ENCODE measurements at regions of chr11 and their contacts with region 1.

Region 1: DNA sequence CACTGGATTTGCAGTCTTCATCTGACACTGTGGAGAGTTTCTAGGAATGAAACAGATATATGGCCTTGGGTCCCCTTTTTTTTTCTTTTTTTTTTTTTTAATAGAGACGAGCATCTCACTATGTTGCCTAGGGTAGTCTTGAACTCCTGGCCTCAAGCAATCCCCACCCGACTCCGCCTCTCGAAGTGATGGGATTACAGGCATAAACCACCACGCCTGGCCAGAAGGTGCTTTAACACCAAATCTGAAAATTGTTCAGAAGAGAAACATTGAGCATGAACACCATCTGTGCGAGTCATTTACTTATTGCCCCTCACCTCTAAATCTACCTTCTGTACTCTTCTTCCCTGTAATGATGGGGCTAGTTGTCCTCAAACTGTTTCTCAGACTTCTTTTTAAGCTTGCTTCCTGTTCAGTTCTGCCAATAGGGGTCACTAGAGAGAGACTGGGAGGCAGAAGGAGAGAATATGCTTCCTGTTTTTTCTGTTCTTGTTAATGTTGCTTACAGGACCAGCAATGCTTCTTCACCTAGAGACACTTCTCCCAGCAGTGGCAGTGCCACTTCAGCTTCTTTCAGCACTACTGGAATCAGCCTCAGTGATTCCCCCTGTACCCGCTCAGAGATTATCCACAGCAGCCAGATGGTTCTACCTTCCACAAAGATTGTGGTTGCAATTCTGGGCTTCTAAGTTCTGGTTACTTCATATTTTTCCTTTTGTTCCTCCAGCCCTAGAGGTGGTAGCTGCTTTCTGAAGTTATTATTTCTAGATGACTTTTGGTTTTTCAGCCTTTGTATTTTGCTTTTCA is 20.8 kb upstream of the ZBED5 start:
- DNase-seq: no peak
- H3K4me3 ChIP-seq: no peak overlapping the region
- CTCF ChIP-seq: peak; percentile 61

Region 2: GRCh38 chr11:10844356-10844755 is 34.3 kb before region 1 on chr11:
- CTCF ChIA-PET with region 1: interaction called, 17 read pairs
- POLR2A ChIA-PET with region 1: no interaction called
- DNase-seq: no peak
- H3K4me3 ChIP-seq: no peak overlapping the region
- CTCF ChIP-seq: no peak

Region 3: GRCh38 chr11:10866893-10867331 is 11.7 kb before region 1 on chr11:
- CTCF ChIA-PET with region 1: interaction called, 15 read pairs
- POLR2A ChIA-PET with region 1: no interaction called
- DNase-seq: no peak
- H3K4me3 ChIP-seq: no peak overlapping the region
- CTCF ChIP-seq: no peak

Region 4: DNA sequence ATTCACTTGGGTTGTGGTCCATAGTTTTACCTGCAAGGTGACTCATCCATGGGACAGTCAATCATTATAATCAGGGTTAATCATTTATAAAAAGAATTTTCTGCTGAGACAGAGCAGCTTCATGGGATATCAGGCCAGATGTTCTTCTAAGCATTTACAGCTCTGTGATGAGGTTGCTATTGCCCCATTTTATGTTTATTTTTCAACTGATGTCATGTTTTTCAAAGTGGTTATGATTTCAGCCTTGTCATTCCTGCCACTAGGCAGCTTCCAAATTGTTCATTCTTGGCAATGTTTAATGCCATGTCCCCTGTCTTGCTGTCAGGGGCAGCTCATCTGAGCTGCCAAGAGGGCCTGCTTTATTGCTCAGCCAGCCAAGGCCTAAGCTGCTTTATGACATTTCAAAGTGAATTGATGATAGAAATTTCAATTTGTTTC is 15.1 kb after region 1 on chr11:
- CTCF ChIA-PET with region 1: interaction called, 145 read pairs
- POLR2A ChIA-PET with region 1: no interaction called
- DNase-seq: no peak
- H3K4me3 ChIP-seq: no peak overlapping the region
- CTCF ChIP-seq: peak; percentile 29

Region 5: DNA sequence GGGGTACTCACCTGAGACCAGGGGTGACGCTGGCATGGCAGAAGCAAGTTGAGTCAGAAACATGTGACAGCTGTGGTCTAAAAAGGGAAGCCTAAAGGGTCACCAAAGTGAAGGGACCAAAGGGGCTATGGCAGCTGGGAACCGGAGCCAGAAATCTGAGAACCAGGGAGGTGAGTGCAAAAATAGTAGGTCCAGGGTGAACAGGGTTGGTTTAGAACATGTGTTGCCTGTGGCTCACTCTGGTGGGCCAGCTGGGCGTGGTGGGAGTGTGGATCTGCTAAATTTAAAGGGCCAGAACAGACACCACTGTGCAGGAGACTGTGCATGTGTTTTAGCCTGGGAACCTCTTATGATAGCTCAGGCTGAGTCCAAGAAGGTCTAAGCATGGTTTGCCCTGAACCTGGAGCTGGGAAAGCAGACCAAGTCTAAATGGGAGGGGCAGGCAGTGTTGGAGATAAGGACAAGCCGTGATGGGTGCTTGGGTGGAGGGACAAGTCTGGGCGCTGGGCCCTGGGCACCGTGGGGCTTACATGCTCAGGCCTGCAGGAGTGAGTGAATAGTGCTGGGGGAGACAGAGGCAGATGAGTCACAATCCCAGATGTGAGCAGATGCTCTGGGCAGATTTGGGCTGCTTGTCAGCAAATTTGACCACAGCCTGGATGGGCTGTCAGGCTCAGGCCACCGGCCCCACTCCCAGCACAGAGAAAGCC is 20.7 kb after region 1 on chr11:
- CTCF ChIA-PET with region 1: interaction called, 145 read pairs
- POLR2A ChIA-PET with region 1: no interaction called
- DNase-seq: no peak
- H3K4me3 ChIP-seq: peak overlapping the region; percentile 35
- CTCF ChIP-seq: no peak

Region 6: DNA sequence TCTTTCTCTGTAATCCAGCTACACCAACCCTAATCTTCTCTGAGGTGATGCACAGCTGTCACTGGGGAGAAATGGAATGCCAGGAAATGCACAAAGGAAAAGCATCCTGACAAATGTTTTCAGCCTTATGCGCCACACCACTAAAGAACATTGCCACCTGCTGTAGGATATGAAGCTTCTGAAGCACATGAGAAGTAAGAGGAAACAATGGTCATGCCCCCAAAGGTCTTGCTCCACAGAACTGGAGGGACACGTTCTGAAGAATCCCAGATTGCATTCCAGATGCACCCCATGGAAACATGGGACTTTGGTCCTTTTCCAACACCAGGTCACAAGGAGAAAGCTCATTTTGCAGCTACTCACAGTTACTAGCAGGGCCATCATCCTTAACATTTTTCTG is 27.9 kb after region 1 on chr11:
- CTCF ChIA-PET with region 1: interaction called, 145 read pairs
- POLR2A ChIA-PET with region 1: no interaction called
- DNase-seq: no peak
- H3K4me3 ChIP-seq: no peak overlapping the region
- CTCF ChIP-seq: peak; percentile 15

Region 7: GRCh38 chr11:10913075-10913474 is 34.5 kb after region 1 on chr11:
- CTCF ChIA-PET with region 1: interaction called, 13 read pairs
- POLR2A ChIA-PET with region 1: no interaction called
- DNase-seq: no peak
- H3K4me3 ChIP-seq: no peak overlapping the region
- CTCF ChIP-seq: no peak